Natural killer cell (primary cell): ENCODE measurements at regions of chr9 and their contacts with region 1.

Region 1: GRCh38 chr9:7976167-7976755 is 176.7 kb upstream of the DMAC1 start:
- DNase-seq: peak; percentile 44 to 91
- ATAC-seq: peak; percentile 90 to 98 (median 95)
- H3K4me3 ChIP-seq: no peak overlapping the region
- H3K4me3 Mint-ChIP-seq: peak overlapping the region; percentile 51
- H3K27ac ChIP-seq: peak overlapping the region; percentile 80
- H3K27ac Mint-ChIP-seq: peak overlapping the region; percentile 80 to 81
- H3K4me1 ChIP-seq: peaks cover 41% of the 10 kb centered on the region
- H3K4me1 Mint-ChIP-seq: peaks cover 58 to 66% of the 10 kb centered on the region in 2 donors
- H3K27me3 ChIP-seq: no peaks in the 10 kb centered on the region
- H3K27me3 Mint-ChIP-seq: peaks cover 6 to 7% of the 10 kb centered on the region in 2 donors
- CTCF ChIP-seq: no peak

Region 2: DNA sequence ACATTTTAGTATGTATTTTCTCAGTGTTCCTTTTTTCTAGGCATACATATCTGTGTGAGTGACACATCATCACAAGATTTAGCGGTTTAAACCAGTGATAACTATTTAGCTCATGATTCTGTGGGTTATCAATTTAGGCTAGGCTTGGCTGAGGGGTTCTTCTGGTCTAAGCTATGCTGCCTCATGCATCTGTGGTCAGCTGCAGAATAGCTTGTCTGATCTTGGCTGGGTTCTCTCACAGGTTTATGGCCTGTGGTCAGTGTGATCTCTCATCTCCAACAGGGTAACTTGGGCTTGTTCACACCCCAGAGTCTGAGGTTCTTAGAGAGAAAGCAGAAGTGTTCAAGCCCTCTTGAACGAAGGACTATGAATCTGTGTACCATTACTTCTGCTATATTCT is 855.2 kb before region 1 on chr9:
- intact Hi-C with region 1: loop called (anchors 5 kb)
- DNase-seq: peak; percentile 22 to 48
- ATAC-seq: peak; percentile 88 to 94 (median 92)
- H3K4me3 ChIP-seq: no peak overlapping the region
- H3K4me3 Mint-ChIP-seq: peak overlapping the region; percentile 87
- H3K27ac ChIP-seq: peak overlapping the region; percentile 60
- H3K27ac Mint-ChIP-seq: peak overlapping the region; percentile 91 to 92
- H3K4me1 ChIP-seq: peaks cover 10% of the 10 kb centered on the region
- H3K4me1 Mint-ChIP-seq: peaks cover 44 to 53% of the 10 kb centered on the region in 2 donors
- H3K27me3 ChIP-seq: no peaks in the 10 kb centered on the region
- H3K27me3 Mint-ChIP-seq: no peaks in the 10 kb centered on the region
- CTCF ChIP-seq: no peak

Region 3: DNA sequence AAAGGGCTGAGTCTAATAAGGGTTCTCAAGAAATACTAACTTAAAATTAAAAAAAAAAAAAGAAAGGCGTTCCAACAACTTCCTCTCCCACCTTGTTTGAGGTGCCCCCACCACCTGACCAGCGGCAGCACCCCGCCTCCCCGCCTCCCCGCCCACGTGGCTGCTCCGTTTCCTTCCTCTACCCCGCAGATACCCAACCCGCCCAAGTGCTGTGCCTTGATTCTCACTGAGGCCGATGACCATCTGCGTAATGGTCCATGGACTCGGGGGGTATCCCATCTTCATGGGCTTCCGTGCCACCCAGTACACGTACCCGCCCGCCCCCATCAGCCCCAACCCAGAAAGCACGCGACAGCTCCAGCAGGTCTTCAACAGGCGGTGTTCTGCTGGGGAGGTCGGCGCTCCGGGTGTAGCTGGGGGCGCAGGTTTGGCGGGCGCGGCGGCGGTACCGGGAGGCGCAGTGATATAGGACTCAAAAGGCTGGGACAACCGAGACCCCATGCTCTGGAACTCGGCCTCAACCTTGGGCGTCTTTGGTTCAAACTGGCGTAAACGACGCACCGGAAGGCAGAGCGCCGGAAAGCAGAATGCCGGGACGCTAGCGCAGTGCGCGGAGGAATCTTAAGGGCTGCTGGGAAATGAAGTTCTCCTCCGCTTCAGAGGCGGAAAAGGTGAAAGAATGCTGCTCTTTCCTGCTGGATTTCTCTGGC is 176.9 kb before region 1 on chr9 and contains the start of gene DMAC1:
- intact Hi-C with region 1: loop called (anchors 5 kb)
- DNase-seq: peak; percentile 63 to 86
- ATAC-seq: peak; percentile 91 to 95 (median 95)
- H3K4me3 ChIP-seq: peak within 1 kb of the TSS; percentile 93
- H3K4me3 Mint-ChIP-seq: peak within 1 kb of the TSS; percentile 84
- H3K27ac ChIP-seq: peak within 1 kb of the TSS; percentile 87
- H3K27ac Mint-ChIP-seq: peak within 1 kb of the TSS; percentile 68 to 90
- H3K4me1 ChIP-seq: peaks cover 4% of the 10 kb centered on the region
- H3K4me1 Mint-ChIP-seq: peaks cover 9 to 16% of the 10 kb centered on the region in 2 donors
- H3K27me3 ChIP-seq: no peaks in the 10 kb centered on the region
- H3K27me3 Mint-ChIP-seq: no peaks in the 10 kb centered on the region
- CTCF ChIP-seq: no peak
- total RNA-seq, gene DMAC1: 10.1 to 16.4 (median 14.4) TPM

Region 4: GRCh38 chr9:7844242-7844641 is 132.0 kb before region 1 on chr9:
- intact Hi-C with region 1: loop called (anchors 1 kb)
- DNase-seq: peak in 1 of 2 donors; percentile 61
- ATAC-seq: peak; percentile 39 to 88 (median 66)
- H3K4me3 ChIP-seq: no peak overlapping the region
- H3K4me3 Mint-ChIP-seq: no peak overlapping the region
- H3K27ac ChIP-seq: no peak overlapping the region
- H3K27ac Mint-ChIP-seq: no peak overlapping the region
- H3K4me1 ChIP-seq: no peaks in the 10 kb centered on the region
- H3K4me1 Mint-ChIP-seq: peaks cover 9 to 13% of the 10 kb centered on the region in 2 donors
- H3K27me3 ChIP-seq: no peaks in the 10 kb centered on the region
- H3K27me3 Mint-ChIP-seq: peaks cover 0 to 2% of the 10 kb centered on the region in 2 donors
- CTCF ChIP-seq: peak; percentile 61

Region 5: DNA sequence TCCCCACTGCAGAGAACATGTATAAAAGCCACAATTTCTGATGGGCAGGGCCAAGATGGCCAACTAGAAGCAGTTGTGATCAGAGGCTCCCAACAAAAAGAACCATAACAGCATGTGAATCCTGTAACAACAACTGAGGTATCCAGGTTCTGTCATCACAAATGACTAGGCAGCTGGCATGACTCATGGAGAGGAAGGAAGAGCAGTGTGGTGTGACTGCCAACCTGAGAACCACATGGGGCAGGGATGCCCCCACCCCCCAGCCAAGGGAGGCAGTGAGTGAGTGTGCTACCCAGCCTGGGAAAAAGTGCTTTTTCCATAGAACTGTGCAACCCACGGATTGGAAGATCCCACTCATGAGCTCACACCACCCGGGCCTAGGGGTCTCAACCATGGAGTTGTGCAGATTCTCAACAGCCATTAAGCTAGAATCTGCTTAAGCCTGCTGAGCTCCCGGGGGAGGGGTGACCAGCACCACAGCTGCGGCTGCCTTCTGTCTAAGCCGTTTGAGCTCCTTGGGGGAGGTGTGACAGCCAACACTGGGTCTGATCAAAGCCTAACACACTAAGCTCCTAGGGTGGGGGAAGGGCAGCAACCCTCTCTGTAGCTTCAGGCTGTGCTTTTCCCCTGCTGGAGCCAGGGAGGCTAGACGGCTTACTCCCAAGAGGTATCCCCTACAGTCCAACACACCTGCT is 96.6 kb before region 1 on chr9:
- intact Hi-C with region 1: loop called (anchors 1 kb)
- DNase-seq: peak; percentile 42 to 61
- ATAC-seq: peak; percentile 84 to 90 (median 85)
- H3K4me3 ChIP-seq: no peak overlapping the region
- H3K4me3 Mint-ChIP-seq: peak overlapping the region; percentile 69
- H3K27ac ChIP-seq: no peak overlapping the region
- H3K27ac Mint-ChIP-seq: peak overlapping the region; percentile 34 to 36
- H3K4me1 ChIP-seq: peaks cover 16% of the 10 kb centered on the region
- H3K4me1 Mint-ChIP-seq: peaks cover 21 to 33% of the 10 kb centered on the region in 2 donors
- H3K27me3 ChIP-seq: no peaks in the 10 kb centered on the region
- H3K27me3 Mint-ChIP-seq: no peaks in the 10 kb centered on the region
- CTCF ChIP-seq: no peak

Region 6: DNA sequence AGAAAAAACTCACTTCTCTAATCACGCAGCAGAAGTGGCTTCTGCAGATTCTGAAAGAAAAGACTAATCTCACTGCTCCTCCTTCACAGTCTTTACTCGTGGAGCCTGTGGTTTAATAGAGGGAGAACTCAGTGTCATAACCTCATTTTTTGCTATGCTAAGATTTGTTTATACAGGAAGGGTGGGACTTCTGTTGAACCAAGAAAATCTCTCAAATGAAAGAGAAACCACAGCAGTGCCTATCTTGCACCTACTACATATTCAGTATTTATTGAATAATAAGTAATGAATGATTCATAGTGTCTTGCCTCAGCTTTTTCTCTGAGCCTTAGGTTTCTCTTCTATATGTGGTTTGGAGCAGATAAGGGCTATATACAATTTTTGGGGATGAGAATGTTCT is 40.6 kb before region 1 on chr9:
- intact Hi-C with region 1: loop called (anchors 1 kb)
- DNase-seq: peak in 1 of 2 donors; percentile 73
- ATAC-seq: peak; percentile 89 to 96 (median 92)
- H3K4me3 ChIP-seq: no peak overlapping the region
- H3K4me3 Mint-ChIP-seq: peak overlapping the region; percentile 88
- H3K27ac ChIP-seq: peak overlapping the region; percentile 80
- H3K27ac Mint-ChIP-seq: peak overlapping the region; percentile 95
- H3K4me1 ChIP-seq: peaks cover 21% of the 10 kb centered on the region
- H3K4me1 Mint-ChIP-seq: peaks cover 16 to 17% of the 10 kb centered on the region in 2 donors
- H3K27me3 ChIP-seq: no peaks in the 10 kb centered on the region
- H3K27me3 Mint-ChIP-seq: peaks cover 0 to 2% of the 10 kb centered on the region in 2 donors
- CTCF ChIP-seq: no peak

Region 7: GRCh38 chr9:8062459-8062858 is 86.2 kb after region 1 on chr9:
- intact Hi-C with region 1: loop called (anchors 5 kb)
- DNase-seq: no peak
- ATAC-seq: peak in 2 of 3 donors; percentile 71 to 73
- H3K4me3 ChIP-seq: no peak overlapping the region
- H3K4me3 Mint-ChIP-seq: no peak overlapping the region
- H3K27ac ChIP-seq: no peak overlapping the region
- H3K27ac Mint-ChIP-seq: no peak overlapping the region
- H3K4me1 ChIP-seq: no peaks in the 10 kb centered on the region
- H3K4me1 Mint-ChIP-seq: peaks cover 16 to 17% of the 10 kb centered on the region in 2 donors
- H3K27me3 ChIP-seq: peaks cover 2% of the 10 kb centered on the region
- H3K27me3 Mint-ChIP-seq: peaks cover 7 to 42% of the 10 kb centered on the region in 2 donors
- CTCF ChIP-seq: no peak

Region 8: GRCh38 chr9:8868632-8869031 is 892.4 kb after region 1 on chr9:
- intact Hi-C with region 1: no loop called
- DNase-seq: no peak
- ATAC-seq: no peak
- H3K4me3 ChIP-seq: no peak overlapping the region
- H3K4me3 Mint-ChIP-seq: no peak overlapping the region
- H3K27ac ChIP-seq: no peak overlapping the region
- H3K27ac Mint-ChIP-seq: no peak overlapping the region
- H3K4me1 ChIP-seq: no peaks in the 10 kb centered on the region
- H3K4me1 Mint-ChIP-seq: no peaks in the 10 kb centered on the region
- H3K27me3 ChIP-seq: no peaks in the 10 kb centered on the region
- H3K27me3 Mint-ChIP-seq: no peaks in the 10 kb centered on the region
- CTCF ChIP-seq: no peak